K562 (cell line): ENCODE measurements at regions of chr9 and their contacts with region 1.

Region 1: DNA sequence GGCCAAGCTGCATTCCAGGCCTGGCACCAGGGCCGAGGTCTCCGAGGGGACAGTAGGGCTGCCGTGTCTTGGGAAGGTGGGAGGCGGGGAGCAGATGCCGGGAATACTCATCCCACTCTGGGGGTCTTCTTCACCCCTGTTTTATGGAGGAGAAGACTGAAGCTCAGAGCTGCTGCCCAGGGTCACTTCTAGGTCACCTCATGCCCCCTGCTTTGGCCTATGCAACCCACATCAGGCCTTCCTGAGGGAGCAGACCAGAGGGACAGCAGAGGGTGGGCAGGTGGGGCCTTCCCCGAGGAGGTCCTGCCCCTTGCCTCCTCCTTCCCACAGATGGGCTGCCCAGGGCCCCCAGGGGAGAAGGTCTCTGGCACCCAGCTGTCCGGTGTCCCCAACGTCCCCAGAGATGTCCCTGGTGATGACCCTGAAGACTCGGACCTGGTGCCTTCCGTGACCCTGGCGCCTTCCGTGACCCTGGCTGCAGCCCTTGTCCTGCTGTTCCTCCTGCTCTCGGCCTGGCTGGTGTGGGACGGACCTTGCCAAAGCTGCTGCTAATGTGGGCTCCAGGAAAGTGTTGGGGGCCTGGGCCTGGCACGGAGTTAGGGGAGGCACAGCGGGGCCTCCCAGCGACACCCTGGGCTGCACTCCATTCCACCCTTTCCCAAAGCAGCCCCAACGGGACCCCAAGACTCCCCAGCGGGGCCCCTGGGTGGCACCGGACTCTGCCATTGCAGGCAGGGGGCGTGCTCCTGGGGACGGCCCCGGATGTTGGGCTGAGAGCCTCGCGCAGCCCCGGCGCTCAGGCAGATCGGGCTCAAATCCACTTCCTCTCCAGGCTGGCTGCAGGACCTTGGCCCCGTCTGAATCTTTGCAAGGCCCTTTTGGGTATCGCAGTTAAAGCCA is 6.7 kb upstream of the SLC2A6 start:
- DNase-seq: peak in 2 of 4 experiments; percentile 29 to 33
- ATAC-seq: peak; percentile 61
- H3K4me3 ChIP-seq: no peak overlapping the region
- H3K27ac ChIP-seq: no peak overlapping the region
- H3K4me1 ChIP-seq: peaks cover 0 to 35% of the 10 kb centered on the region in 2 experiments; a peak in 3 of 5 replicates
- H3K27me3 ChIP-seq: peaks cover 19 to 63% of the 10 kb centered on the region in 2 experiments; a peak in 4 of 5 replicates
- CTCF ChIP-seq: no peak
- EP300 ChIP-seq: no peak
- POLR2A ChIP-seq: no peak
- RAD21 ChIP-seq: no peak

Region 2: DNA sequence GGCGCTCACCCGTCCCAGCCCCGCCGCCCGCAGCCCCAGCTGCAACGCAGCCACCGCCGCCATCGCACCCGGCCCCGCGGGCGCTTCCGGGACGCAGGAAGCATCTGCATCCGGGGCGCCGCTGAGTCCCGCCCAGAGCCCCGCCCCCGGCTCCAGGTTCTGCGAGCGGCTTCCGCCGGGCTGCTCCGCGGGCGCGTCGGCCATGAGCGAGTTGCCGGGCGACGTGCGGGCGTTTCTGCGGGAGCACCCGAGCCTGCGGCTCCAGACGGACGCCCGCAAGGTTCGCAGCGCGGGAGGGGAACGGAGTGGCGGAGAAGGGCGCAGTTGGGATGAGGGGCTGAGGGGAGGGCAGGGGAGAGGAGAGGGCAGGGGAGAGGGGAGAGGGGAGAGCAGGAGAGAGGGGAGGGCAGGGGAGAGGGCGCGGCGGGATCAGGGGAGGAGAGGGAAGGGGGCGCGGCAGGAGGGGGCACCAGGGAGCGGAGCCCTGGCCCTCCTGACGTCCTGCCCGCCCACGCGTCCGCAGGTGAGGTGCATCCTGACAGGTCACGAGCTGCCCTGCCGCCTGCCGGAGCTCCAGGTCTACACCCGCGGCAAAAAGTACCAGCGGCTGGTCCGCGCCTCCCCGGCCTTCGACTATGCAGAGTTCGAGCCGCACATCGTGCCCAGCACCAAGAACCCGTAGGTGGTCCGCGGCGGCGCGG is 129.1 kb before region 1 on chr9 and contains the starts of genes SURF1 and SURF2:
- CTCF ChIA-PET with region 1: interaction called, 5 read pairs
- POLR2A ChIA-PET with region 1: interaction called, 3 read pairs
- in situ Hi-C with region 1: no loop called
- intact Hi-C with region 1: loop called (anchors 2 kb)
- DNase-seq: peak; percentile 83 to 91 (median 88)
- ATAC-seq: peak; percentile 85
- H3K4me3 ChIP-seq: peak within 1 kb of the TSS; percentile 67
- H3K27ac ChIP-seq: peak within 1 kb of the TSS; percentile 48
- H3K4me1 ChIP-seq: peaks cover 17 to 45% of the 10 kb centered on the region in 2 experiments; a peak in 4 of 5 replicates
- H3K27me3 ChIP-seq: no peaks in the 10 kb centered on the region
- CTCF ChIP-seq: peak in 2 of 3 experiments; percentile 21 to 43; a peak in 3 of 6 replicates
- EP300 ChIP-seq: no peak
- POLR2A ChIP-seq: peak; percentile 79
- RAD21 ChIP-seq: no peak; a peak in 1 of 4 replicates
- polyA plus RNA-seq, gene SURF1: 16.1 to 16.3 TPM
- polyA plus RNA-seq, gene SURF2: 5.5 to 10.2 TPM

Region 3: GRCh38 chr9:133406480-133407307 is 78.9 kb before region 1 on chr9:
- CTCF ChIA-PET with region 1: interaction called, 5 read pairs
- POLR2A ChIA-PET with region 1: no interaction called
- in situ Hi-C with region 1: no loop called
- intact Hi-C with region 1: loop called (anchors 1 kb)
- DNase-seq: peak; percentile 67 to 80 (median 70)
- ATAC-seq: peak; percentile 93
- H3K4me3 ChIP-seq: no peak overlapping the region
- H3K27ac ChIP-seq: no peak overlapping the region
- H3K4me1 ChIP-seq: peaks cover 0 to 20% of the 10 kb centered on the region in 2 experiments; a peak in 3 of 5 replicates
- H3K27me3 ChIP-seq: no peaks in the 10 kb centered on the region
- CTCF ChIP-seq: peak; percentile 86 to 95 (median 87)
- EP300 ChIP-seq: no peak
- POLR2A ChIP-seq: no peak
- RAD21 ChIP-seq: peak; percentile 49 to 68